PC-9 (cell line): ENCODE measurements at regions of chr20 and their contacts with region 1.

Region 1: GRCh38 chr20:407133-407952 is 756 bp upstream of the RBCK1 start:
- DNase-seq: peak; percentile 48 to 78
- H3K4me3 ChIP-seq: peak overlapping the region; percentile 63
- H3K27ac ChIP-seq: peak overlapping the region; percentile 67
- H3K4me1 ChIP-seq: peaks cover 32% of the 10 kb centered on the region
- H3K27me3 ChIP-seq: no peaks in the 10 kb centered on the region
- CTCF ChIP-seq: peak; percentile 43; the same call in 1 of the 2 replicates

Region 2: DNA sequence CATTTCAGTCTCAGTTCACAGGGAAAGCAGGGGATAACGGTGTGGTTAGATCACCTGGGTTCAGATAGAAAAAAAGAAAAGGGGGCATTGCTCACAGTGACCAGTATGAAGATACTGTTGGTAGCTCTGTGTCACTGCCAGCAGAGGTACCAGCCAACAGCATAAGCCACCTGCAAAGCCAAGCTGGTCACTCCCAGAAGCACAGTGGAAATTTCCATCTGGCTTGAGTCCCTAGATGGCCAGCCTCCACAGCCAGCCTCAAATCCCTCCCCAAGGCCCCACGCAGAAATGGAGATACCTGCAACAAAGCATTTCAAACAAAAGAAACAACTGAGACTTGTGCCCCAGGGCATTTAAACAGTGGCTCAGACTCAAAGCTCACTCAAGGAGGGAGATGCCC is 238.5 kb before region 1 on chr20:
- CTCF ChIA-PET with region 1: no interaction called
- POLR2A ChIA-PET with region 1: no interaction called
- intact Hi-C with region 1: no loop called
- DNase-seq: no peak
- H3K4me3 ChIP-seq: no peak overlapping the region
- H3K27ac ChIP-seq: no peak overlapping the region
- H3K4me1 ChIP-seq: no peaks in the 10 kb centered on the region
- H3K27me3 ChIP-seq: peaks cover 44% of the 10 kb centered on the region
- CTCF ChIP-seq: no peak

Region 3: GRCh38 chr20:324177-325044 is 82.9 kb before region 1 on chr20:
- CTCF ChIA-PET with region 1: no interaction called
- POLR2A ChIA-PET with region 1: no interaction called
- intact Hi-C with region 1: no loop called
- DNase-seq: peak; percentile 86 to 98
- H3K4me3 ChIP-seq: peak overlapping the region; percentile 83
- H3K27ac ChIP-seq: peak overlapping the region; percentile 85
- H3K4me1 ChIP-seq: peaks cover 20% of the 10 kb centered on the region
- H3K27me3 ChIP-seq: no peaks in the 10 kb centered on the region
- CTCF ChIP-seq: no peak; the same call in 1 of the 2 replicates

Region 4: GRCh38 chr20:381581-382290 is 25.6 kb before region 1 on chr20:
- CTCF ChIA-PET with region 1: no interaction called
- POLR2A ChIA-PET with region 1: interaction called, 7 read pairs
- intact Hi-C with region 1: loop called (anchors 2 kb)
- DNase-seq: peak; percentile 65 to 84
- H3K4me3 ChIP-seq: peak overlapping the region; percentile 59
- H3K27ac ChIP-seq: peak overlapping the region; percentile 99
- H3K4me1 ChIP-seq: peaks cover 62% of the 10 kb centered on the region
- H3K27me3 ChIP-seq: no peaks in the 10 kb centered on the region
- CTCF ChIP-seq: no peak

Region 5: GRCh38 chr20:1254254-1254653 is 846.9 kb after region 1 on chr20:
- CTCF ChIA-PET with region 1: no interaction called
- POLR2A ChIA-PET with region 1: no interaction called
- intact Hi-C with region 1: no loop called
- DNase-seq: no peak
- H3K4me3 ChIP-seq: no peak overlapping the region
- H3K27ac ChIP-seq: no peak overlapping the region
- H3K4me1 ChIP-seq: no peaks in the 10 kb centered on the region
- H3K27me3 ChIP-seq: no peaks in the 10 kb centered on the region
- CTCF ChIP-seq: no peak

Region 6: DNA sequence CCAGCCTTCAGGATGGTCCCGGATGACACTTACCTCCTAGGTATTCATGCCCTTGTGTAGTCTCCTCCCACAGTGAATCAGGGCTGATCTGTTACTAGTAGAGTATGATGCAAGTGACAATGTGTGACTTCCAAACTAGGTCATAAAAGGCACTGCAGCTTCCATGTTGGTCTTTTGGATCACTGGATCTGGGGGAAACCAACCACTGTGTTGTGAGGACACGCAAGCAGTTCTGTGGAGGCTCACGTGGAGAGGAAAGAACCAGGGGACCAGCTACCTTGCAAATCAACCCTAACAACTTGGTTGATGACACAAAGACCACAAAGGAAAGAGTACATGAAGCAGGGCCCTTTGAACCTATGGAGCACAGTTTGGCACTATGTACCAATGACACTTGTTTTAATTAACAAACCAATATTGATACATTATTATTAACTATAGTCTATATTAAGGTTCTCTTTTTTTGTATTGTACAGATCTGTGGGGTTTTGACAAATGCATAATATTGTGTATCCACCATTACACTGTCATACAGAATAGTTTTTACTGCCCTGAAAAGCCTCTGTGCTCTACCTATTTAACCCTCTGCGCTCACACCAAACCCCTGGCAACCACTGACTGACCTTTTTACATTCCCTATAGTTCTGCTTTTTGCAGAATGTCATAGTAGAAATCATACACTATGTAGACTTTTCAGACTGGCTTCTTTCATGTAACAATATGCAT is 937.9 kb after region 1 on chr20:
- CTCF ChIA-PET with region 1: no interaction called
- POLR2A ChIA-PET with region 1: no interaction called
- intact Hi-C with region 1: no loop called
- DNase-seq: no peak
- H3K4me3 ChIP-seq: no peak overlapping the region
- H3K27ac ChIP-seq: no peak overlapping the region
- H3K4me1 ChIP-seq: no peaks in the 10 kb centered on the region
- H3K27me3 ChIP-seq: no peaks in the 10 kb centered on the region
- CTCF ChIP-seq: no peak